Psoas muscle (tissue), 8 donors: ENCODE measurements at regions of chr1 and their contacts with region 1.

Region 1: GRCh38 chr1:13792419-13792818 is 92.4 kb downstream of the PRDM2 start:
- DNase-seq: no peak
- ATAC-seq: peak; percentile 71 to 84 (median 82)
- H3K4me3 ChIP-seq: no peak overlapping the region
- H3K27ac ChIP-seq: peak overlapping the region; percentile 82
- H3K4me1 ChIP-seq: peaks cover 49% of the 10 kb centered on the region
- H3K27me3 ChIP-seq: no peaks in the 10 kb centered on the region
- CTCF ChIP-seq: no peak

Region 2: DNA sequence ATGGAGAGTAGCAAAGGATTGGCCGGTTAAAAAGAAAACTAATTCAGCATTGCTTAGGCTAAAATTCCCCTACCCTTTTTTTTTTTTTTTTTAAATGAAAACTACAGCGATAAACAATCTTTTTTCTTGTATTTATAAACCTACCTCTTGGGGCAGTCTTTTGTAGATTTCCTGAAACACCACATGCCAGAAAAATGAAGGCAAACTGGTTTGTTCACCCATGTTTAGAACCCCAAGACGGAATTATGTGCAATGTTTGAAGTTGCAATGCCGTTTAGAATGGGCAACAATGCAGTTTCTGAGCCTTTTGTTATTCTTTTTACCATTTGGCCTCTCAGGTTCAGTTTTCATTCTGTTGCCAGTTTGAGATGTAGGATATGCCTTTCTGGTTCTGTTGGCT is 33.3 kb before region 1 on chr1:
- intact Hi-C with region 1: loop called (anchors 2 kb)
- DNase-seq: no peak
- ATAC-seq: no peak
- H3K4me3 ChIP-seq: no peak overlapping the region
- H3K27ac ChIP-seq: no peak overlapping the region
- H3K4me1 ChIP-seq: peaks cover 93% of the 10 kb centered on the region
- H3K27me3 ChIP-seq: no peaks in the 10 kb centered on the region
- CTCF ChIP-seq: no peak

Region 3: GRCh38 chr1:13813398-13814012 is 21.1 kb after region 1 on chr1:
- intact Hi-C with region 1: no loop called
- DNase-seq: peak in 1 of 2 donors; percentile 72
- ATAC-seq: peak in 3 of 4 donors; percentile 40 to 50 (median 49)
- H3K4me3 ChIP-seq: no peak overlapping the region
- H3K27ac ChIP-seq: no peak overlapping the region
- H3K4me1 ChIP-seq: peaks cover 4% of the 10 kb centered on the region
- H3K27me3 ChIP-seq: no peaks in the 10 kb centered on the region
- CTCF ChIP-seq: peak; percentile 49

Region 4: DNA sequence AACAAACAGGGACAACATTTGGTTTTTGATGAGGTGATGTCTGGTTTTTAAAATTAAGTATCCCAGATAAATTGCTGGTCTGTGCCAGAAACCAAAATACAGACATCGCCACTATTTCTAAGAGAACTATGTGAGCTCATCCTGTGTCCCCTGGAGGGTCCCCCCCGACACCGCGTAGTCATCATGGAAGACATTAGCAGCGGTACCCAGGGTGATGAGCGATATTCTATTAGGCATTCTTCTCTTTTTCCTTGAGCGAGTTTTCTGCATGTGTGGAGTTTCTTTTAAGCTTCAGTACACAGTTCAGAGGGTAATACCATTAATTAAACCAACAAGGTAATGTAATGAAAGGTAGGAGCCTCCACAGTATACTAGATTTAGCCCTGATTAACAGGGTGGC is 832.5 kb after region 1 on chr1:
- intact Hi-C with region 1: loop called in 1 of 2 experiments (anchors 5 kb)
- DNase-seq: no peak
- ATAC-seq: no peak
- H3K4me3 ChIP-seq: no peak overlapping the region
- H3K27ac ChIP-seq: no peak overlapping the region
- H3K4me1 ChIP-seq: no peaks in the 10 kb centered on the region
- H3K27me3 ChIP-seq: peaks cover 0 to 3% (median 0%) of the 10 kb centered on the region in 3 donors
- CTCF ChIP-seq: no peak